ENCODE measurements at regions of chr14 and their contacts with region 1.

Region 1: GRCh38 chr14:73526569-73526968 is 10.4 kb upstream of the ACOT1 start:
- DNase-seq: no peak
- H3K4me3 ChIP-seq: no peak overlapping the region
- H3K27ac ChIP-seq: no peak overlapping the region
- H3K4me1 ChIP-seq: no peaks in the 10 kb centered on the region
- H3K27me3 ChIP-seq: no peaks in the 10 kb centered on the region
- CTCF ChIP-seq: no peak

Region 2: DNA sequence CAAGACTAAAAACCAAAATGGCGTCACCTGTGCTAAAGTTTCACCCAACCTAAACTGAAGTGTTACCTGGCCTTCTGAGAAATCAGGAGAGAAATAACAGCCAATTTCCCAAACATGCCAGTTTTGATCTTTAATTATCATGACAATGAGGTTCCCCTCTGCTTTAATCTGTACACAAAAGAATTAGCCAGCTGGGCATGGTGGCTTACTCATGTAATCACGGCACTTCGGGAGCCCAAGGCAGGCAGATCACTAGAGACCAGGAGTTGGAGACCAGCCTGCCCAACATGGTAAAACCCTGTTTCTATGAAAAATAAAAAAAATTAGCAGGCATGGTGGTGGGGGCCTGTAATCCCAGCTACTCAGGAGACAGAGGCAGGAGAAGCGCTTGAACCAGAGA is 27.3 kb after region 1 on chr14:
- CTCF ChIA-PET with region 1: no interaction called
- POLR2A ChIA-PET with region 1: no interaction called
- intact Hi-C with region 1: loop called (anchors 2 kb)
- DNase-seq: peak; percentile 43
- H3K4me3 ChIP-seq: no peak overlapping the region
- H3K27ac ChIP-seq: no peak overlapping the region
- H3K4me1 ChIP-seq: no peaks in the 10 kb centered on the region
- H3K27me3 ChIP-seq: no peaks in the 10 kb centered on the region
- CTCF ChIP-seq: no peak

Region 3: GRCh38 chr14:73685328-73685727 is 158.8 kb after region 1 on chr14:
- CTCF ChIA-PET with region 1: no interaction called
- POLR2A ChIA-PET with region 1: no interaction called
- intact Hi-C with region 1: no loop called
- DNase-seq: no peak
- H3K4me3 ChIP-seq: no peak overlapping the region
- H3K27ac ChIP-seq: no peak overlapping the region
- H3K4me1 ChIP-seq: no peaks in the 10 kb centered on the region
- H3K27me3 ChIP-seq: no peaks in the 10 kb centered on the region
- CTCF ChIP-seq: no peak

Measured in A673 (cell line).